GM10248 (cell line): ENCODE measurements at regions of chr12 and their contacts with region 1.

Region 1: GRCh38 chr12:104108755-104109445 is 29.1 kb downstream of the NFYB start:
- DNase-seq: peak; percentile 66
- CTCF ChIP-seq: peak; percentile 87

Region 2: DNA sequence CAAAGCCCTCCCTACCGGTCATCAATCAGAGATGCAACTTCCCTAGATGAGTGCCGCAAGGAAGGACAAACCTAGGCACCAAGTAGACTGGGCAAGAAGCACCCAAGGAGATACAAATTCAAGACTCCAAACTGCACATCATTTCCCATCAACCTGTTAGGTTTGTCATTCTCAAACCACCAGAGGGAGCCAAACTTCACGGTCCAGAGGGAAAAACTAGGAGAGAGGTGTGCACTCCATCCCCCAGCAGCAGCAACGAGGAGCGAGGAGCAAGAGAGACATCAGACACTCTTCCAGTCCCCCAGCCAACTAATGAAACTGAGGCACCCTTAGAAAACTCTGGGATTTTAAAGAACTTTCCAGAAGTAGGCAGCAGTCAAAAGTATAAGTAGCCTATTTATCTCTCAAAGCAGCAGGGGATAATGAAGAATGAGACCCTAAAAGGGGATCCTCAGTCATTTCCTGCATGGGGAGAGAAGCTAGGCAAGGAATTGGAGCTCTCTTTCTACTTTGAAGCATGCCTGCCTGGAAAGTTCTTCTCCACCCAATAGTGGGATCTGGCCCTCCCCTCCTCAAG is 230.9 kb before region 1 on chr12:
- CTCF ChIA-PET with region 1: interaction called, 51 read pairs
- POLR2A ChIA-PET with region 1: no interaction called
- DNase-seq: peak; percentile 71
- CTCF ChIP-seq: peak; percentile 74

Region 3: DNA sequence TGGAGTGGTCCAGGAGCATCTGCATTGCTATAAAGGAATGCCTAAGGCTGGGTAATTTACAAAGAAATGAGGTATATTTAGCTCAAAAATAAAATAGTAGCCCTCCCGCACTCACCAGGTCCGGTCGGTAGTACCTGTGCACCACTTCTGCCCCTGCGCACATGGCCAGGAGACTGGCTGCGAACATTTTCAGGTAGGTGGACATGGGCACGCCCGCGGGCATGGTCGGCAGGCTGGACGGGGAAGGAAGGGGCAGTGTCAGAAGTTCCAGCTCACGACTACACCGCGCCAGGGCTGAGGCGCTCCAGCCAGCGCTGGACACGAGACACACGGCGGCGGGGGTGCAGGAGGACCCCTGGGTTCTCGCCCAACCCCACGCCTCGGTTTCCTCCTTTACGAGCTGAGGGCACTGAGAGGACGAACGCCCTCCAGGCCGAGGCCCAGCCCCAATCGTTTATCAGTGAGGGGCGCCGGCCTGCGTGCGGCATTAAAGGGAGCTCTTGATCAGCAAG is 152.3 kb before region 1 on chr12:
- CTCF ChIA-PET with region 1: interaction called, 11 read pairs
- POLR2A ChIA-PET with region 1: no interaction called
- DNase-seq: no peak
- CTCF ChIP-seq: no peak

Region 4: GRCh38 chr12:104064031-104064822 is 44.7 kb before region 1 on chr12 and contains the start of gene HCFC2:
- CTCF ChIA-PET with region 1: interaction called, 37 read pairs
- POLR2A ChIA-PET with region 1: no interaction called
- DNase-seq: peak; percentile 99
- CTCF ChIP-seq: no peak

Region 5: GRCh38 chr12:104097954-104098353 is 10.9 kb before region 1 on chr12:
- CTCF ChIA-PET with region 1: interaction called, 51 read pairs
- POLR2A ChIA-PET with region 1: no interaction called
- DNase-seq: no peak
- CTCF ChIP-seq: no peak

Region 6: DNA sequence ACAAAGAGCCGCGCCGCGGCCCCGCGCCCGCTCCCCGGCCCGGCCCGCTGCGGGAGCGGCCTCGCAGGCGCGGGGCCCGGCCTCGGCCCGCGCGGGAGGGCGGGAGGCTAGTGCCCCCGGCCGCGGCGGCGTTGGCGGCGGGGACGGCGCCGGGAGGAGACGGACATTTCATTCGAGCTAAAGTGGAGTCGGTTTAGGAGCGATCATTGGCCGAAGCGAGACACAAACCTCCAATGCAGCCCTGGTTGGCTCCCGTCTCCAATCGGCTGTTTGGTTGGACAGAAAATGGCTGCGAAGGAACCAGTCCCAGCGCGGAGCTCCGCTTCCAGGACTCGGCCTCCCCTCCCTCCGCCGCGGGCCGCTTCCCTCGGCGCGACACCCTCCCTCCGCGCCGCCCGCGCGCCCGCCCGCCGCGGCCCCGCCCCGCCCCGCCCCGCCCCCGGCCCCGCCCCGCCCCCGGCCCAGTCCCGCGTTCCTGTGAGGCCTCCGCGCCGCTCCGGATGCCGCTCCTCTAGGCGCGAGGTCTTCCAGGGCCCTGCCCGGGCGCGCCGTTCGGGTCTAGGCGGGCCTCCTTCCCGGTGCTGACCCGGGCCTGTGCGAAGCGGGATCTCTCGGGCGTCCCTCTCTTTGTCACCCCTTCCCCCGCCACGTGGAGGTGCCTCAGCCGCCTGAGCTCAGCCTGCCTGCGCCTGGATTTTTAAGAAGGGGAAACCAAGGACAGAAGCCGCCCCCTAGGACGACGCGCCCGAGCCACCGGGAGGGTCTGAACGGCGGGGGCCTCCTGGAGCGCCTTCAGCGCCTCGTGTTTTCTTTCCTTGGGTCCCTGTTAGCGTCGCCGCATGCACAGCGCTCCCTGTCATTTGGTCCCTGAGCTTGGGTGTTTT is 29.3 kb after region 1 on chr12 and contains the start of gene NFYB:
- CTCF ChIA-PET with region 1: interaction called, 72 read pairs
- POLR2A ChIA-PET with region 1: no interaction called
- DNase-seq: peak; percentile 98
- CTCF ChIP-seq: no peak

Region 7: DNA sequence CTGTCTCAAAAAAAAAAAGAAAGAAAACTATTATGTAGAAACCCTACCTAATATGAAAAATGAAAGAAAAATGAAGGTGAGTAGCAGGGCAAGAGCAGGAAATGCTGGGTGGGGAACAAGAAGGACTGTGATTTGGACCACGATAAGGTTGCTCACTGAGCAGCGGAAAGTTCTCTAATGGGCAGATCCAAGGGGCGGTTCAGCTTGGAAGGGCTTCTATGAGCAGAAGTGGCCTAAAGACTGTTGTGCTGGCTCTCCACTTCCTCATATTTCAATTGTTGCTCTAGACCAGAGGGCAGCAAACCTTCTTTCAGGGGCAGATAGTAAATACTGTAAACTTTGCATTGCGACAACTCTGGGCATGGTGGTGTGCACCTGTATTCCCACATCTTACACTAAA is 45.4 kb after region 1 on chr12:
- CTCF ChIA-PET with region 1: no interaction called
- POLR2A ChIA-PET with region 1: no interaction called
- DNase-seq: no peak
- CTCF ChIP-seq: no peak

Region 8: GRCh38 chr12:104339663-104340062 is 230.8 kb after region 1 on chr12:
- CTCF ChIA-PET with region 1: no interaction called
- POLR2A ChIA-PET with region 1: no interaction called
- DNase-seq: no peak
- CTCF ChIP-seq: no peak